Naive thymus-derived CD4-positive, alpha-beta T cell (primary cell): ENCODE measurements at regions of chr5 and their contacts with region 1.

Region 1: DNA sequence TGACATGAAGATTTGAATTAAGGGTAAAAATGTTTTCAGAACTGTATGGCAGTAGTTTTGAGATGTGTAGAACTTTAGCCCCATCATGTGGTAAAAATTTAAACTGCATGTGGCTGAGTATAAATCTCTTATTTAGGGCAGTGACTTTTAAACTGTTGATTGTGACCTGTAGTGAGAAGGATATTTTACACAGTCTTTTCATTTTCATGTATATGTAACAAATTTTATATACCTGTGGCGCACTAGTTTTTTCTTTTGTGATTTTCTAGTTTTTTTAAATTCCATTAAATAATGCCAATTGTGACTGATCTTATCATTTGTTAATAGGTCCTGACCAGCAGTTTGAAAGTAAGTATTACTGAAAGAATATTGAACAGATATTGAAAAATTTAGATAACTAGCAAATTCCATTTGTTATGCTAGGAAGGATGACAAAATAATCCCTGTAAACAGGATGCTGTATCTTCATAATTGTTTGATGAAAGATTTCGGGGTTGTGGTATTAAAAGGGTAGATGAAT is 47.2 kb downstream of the GPBP1 start:
- DNase-seq: peak in 7 of 9 donors; percentile 41 to 79 (median 73)
- ATAC-seq: peak; percentile 86
- H3K4me3 ChIP-seq: no peak overlapping the region
- H3K4me3 Mint-ChIP-seq: peak overlapping the region in 1 of 10 donors; percentile 30
- H3K27ac ChIP-seq: no peak overlapping the region
- H3K27ac Mint-ChIP-seq: peak overlapping the region in 8 of 9 donors; percentile 19 to 87 (median 76)
- H3K4me1 ChIP-seq: peaks cover 4 to 7% of the 10 kb centered on the region in 2 donors
- H3K4me1 Mint-ChIP-seq: peaks cover 3 to 62% (median 41%) of the 10 kb centered on the region in 7 donors
- H3K27me3 ChIP-seq: no peaks in the 10 kb centered on the region
- H3K27me3 Mint-ChIP-seq: no peaks in the 10 kb centered on the region

Region 2: DNA sequence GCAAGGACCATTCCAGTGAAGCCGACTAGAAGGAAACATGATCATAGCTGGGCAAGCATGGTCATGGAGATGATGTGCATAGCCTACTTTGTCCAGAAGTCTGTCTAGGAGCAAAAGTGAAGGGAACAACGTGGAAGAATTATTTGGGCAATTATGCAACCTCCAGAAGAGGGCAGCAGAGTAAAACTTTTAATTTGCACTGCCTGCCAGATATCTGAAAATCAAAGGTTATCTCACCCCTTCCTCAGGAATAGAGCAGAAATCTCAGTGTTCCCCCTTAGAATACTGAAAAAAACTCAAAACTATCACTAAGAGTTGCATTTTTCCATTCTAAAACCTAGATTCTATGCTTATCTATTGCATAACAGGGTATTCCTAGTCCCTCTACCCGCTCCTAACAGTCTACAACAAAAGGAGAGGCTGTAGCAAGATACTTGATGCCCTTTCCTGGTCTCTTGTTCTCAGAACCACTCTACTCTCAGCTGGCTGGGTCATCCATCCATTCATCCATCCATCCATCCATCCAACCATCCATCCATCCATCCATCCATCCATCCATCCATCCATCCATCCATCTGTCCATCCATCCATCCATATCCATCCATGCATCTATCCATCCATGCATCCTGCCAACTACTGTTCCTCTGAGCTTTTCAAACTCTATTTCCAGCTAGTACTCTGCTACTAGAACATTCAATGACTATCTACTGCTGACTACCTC is 320.1 kb before region 1 on chr5:
- CTCF ChIA-PET with region 1: interaction called, 22 read pairs
- POLR2A ChIA-PET with region 1: interaction called, 3 read pairs
- intact Hi-C with region 1: loop called (anchors 1 kb)
- DNase-seq: peak in 7 of 9 donors; percentile 20 to 62 (median 51)
- ATAC-seq: peak; percentile 81
- H3K4me3 ChIP-seq: no peak overlapping the region
- H3K4me3 Mint-ChIP-seq: no peak overlapping the region
- H3K27ac ChIP-seq: no peak overlapping the region
- H3K27ac Mint-ChIP-seq: no peak overlapping the region
- H3K4me1 ChIP-seq: no peaks in the 10 kb centered on the region
- H3K4me1 Mint-ChIP-seq: peaks cover 0 to 6% (median 0%) of the 10 kb centered on the region in 7 donors
- H3K27me3 ChIP-seq: no peaks in the 10 kb centered on the region
- H3K27me3 Mint-ChIP-seq: peaks cover 0 to 15% (median 0%) of the 10 kb centered on the region in 5 donors

Region 3: GRCh38 chr5:56951946-56952691 is 269.0 kb before region 1 on chr5 and contains the start of gene MIER3:
- CTCF ChIA-PET with region 1: no interaction called
- POLR2A ChIA-PET with region 1: interaction called, 4 read pairs
- intact Hi-C with region 1: loop called (anchors 1 to 2 kb)
- DNase-seq: peak; percentile 66 to 87 (median 80)
- ATAC-seq: peak; percentile 94
- H3K4me3 ChIP-seq: peak within 1 kb of the TSS; percentile 75
- H3K4me3 Mint-ChIP-seq: peak within 1 kb of the TSS; percentile 89 to 98 (median 96)
- H3K27ac ChIP-seq: peak within 1 kb of the TSS; percentile 73
- H3K27ac Mint-ChIP-seq: peak within 1 kb of the TSS in 8 of 9 donors; percentile 84 to 95 (median 88)
- H3K4me1 ChIP-seq: peaks cover 6 to 10% of the 10 kb centered on the region in 2 donors
- H3K4me1 Mint-ChIP-seq: peaks cover 18 to 32% (median 22%) of the 10 kb centered on the region in 7 donors
- H3K27me3 ChIP-seq: peaks cover 0 to 5% of the 10 kb centered on the region in 2 donors
- H3K27me3 Mint-ChIP-seq: peaks cover 10 to 45% (median 24%) of the 10 kb centered on the region in 5 donors
- total RNA-seq, gene MIER3: 14.9 to 35.0 (median 26.2) TPM

Region 4: DNA sequence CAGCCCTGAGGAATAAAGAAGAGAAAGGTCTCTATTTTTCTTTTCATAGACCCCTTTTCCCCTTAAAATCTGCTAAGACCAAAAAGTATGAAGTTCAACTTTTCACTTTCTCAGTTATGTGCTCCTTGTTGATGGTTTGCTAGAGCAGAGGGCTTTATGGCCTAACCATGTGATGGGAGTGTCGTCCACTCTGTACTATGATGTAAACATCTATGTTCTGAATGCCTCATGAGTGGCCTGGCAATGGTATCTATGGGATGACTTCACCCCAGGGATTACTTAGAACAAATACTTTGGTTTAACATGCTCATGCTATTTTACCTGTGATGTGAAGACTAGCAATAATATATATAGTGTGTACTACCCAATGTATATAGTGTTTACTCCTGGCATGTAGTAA is 225.5 kb before region 1 on chr5:
- CTCF ChIA-PET with region 1: no interaction called
- POLR2A ChIA-PET with region 1: no interaction called
- intact Hi-C with region 1: loop called in 1 of 2 experiments (anchors 5 kb)
- DNase-seq: no peak
- ATAC-seq: no peak
- H3K4me3 ChIP-seq: no peak overlapping the region
- H3K4me3 Mint-ChIP-seq: no peak overlapping the region
- H3K27ac ChIP-seq: no peak overlapping the region
- H3K27ac Mint-ChIP-seq: no peak overlapping the region
- H3K4me1 ChIP-seq: no peaks in the 10 kb centered on the region
- H3K4me1 Mint-ChIP-seq: peaks cover 0 to 2% (median 0%) of the 10 kb centered on the region in 7 donors
- H3K27me3 ChIP-seq: peaks cover 0 to 3% of the 10 kb centered on the region in 2 donors
- H3K27me3 Mint-ChIP-seq: peaks cover 0 to 25% (median 8%) of the 10 kb centered on the region in 5 donors